ENCODE measurements at regions of chr13 and their contacts with region 1.

Region 1: DNA sequence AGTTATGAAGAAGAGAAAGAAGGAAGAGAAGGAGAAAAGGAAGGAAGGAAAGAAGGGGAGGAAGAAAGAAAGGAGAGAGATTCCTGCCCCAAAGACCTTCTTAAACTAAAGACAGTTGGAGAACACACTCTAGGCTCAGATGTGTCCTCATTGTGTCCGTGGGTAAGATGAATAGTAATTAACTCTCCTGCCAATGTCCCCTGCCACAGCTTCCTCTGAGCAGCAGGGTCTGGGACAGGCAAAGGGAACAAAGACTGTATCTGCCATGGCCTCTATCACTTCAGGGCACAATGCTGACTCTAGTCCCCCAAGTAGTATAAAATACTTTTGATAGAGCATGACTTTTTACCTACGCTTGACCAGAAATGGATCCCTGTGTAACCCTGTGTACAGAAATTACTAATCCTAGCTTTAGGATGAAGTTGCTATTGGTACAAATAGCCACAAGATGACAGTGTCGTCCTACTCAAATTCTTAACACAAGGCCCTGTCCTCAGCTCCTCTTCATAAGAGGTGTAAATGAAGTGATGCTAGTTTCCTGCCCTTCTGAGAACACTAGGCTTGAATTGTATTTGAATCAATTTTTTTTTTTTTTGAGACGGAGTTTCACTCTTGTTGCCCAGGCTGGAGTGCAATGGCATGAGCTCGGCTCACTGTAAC is 186.2 kb upstream of the GPR12 start:
- DNase-seq: peak; percentile 73
- ATAC-seq: peak; percentile 97
- H3K4me3 ChIP-seq: no peak overlapping the region
- H3K27ac ChIP-seq: no peak overlapping the region
- H3K4me1 ChIP-seq: peaks cover 3% of the 10 kb centered on the region; the same call in 1 of the 2 replicates
- H3K27me3 ChIP-seq: peaks cover 13% of the 10 kb centered on the region
- CTCF ChIP-seq: peak; percentile 93
- POLR2A ChIP-seq: 0 out of 2 replicates have a peak, but pooled peaks have one; percentile 31
- RAD21 ChIP-seq: peak; percentile 95

Region 2: DNA sequence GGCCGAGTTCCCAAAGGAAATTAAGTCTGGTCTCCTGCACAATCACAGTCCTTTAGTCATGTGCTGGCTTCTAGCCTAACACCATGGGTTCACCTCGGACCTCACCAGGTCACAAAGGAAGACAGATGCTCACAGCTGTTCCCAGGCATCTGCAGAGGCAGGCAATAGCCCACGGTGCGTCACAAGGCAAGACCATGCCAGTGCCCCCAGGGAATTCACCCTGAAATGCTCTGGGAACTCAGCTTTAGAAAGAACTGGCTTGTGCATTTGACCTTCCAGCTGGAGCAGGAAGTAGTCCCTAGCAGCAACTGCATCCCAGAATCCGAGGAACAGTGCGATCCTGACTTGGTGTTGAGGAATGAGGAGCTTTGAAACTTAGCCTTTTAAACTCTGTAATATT is 486.2 kb before region 1 on chr13:
- CTCF ChIA-PET with region 1: no interaction called
- POLR2A ChIA-PET with region 1: no interaction called
- dilution Hi-C with region 1: no loop called
- in situ Hi-C with region 1: no loop called
- intact Hi-C with region 1: no loop called
- DNase-seq: peak; percentile 84
- ATAC-seq: peak; percentile 48
- H3K4me3 ChIP-seq: no peak overlapping the region
- H3K27ac ChIP-seq: no peak overlapping the region
- H3K4me1 ChIP-seq: peaks cover 5% of the 10 kb centered on the region; the same call in 1 of the 2 replicates
- H3K27me3 ChIP-seq: peaks cover 5% of the 10 kb centered on the region; the same call in 1 of the 2 replicates
- CTCF ChIP-seq: no peak
- POLR2A ChIP-seq: no peak
- RAD21 ChIP-seq: no peak

Region 3: DNA sequence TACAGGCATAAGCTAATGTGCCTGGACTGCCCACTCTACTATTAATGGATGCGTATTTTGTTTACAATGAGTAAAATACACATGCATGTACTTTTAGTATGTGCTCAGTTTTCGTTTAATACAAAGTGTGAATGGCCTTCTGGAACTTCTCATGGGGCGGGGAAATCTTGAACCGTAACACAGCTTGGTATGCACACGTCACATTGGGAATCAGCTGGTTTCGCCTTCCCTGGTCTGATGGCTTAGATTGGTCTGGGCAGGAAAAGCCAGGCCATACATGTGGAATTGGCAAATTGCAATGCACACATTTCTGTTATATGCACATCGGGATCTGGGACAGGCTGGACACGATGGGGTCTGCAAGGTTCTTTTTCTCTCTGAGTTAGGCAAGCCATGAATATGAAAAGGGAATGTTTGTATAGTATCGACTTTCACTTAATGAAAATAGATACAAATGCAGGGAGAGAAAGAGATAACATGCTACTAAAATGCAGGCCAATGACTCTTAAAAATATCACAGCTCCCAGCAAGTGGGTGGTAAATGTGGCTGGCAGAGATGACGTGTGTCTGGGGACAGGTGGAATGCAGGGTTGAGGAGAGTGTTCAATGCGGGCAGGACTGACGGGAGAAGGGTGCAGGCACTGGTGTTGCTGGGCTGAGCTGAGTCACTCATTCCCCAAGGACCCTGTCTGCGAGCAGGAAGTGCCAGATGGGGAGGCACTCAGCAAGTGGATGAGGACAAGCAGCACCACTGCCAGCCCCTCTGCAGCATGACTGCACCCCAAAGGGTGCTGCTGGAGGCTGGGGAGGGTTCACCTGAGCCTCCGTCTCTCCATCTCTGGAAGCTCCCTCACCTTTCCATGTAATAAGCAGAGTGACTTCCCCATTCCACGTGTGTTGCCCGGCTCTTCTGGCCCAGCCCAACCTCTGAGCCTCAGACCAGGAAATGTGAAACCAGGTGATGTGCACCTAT is 17.8 kb after region 1 on chr13:
- CTCF ChIA-PET with region 1: interaction called, 10 read pairs
- POLR2A ChIA-PET with region 1: no interaction called
- dilution Hi-C with region 1: no loop called
- in situ Hi-C with region 1: no loop called
- intact Hi-C with region 1: no loop called
- DNase-seq: peak; percentile 67
- ATAC-seq: no peak; the same call in 1 of the 2 replicates
- H3K4me3 ChIP-seq: no peak overlapping the region
- H3K27ac ChIP-seq: no peak overlapping the region
- H3K4me1 ChIP-seq: peaks cover 18% of the 10 kb centered on the region; the same call in 1 of the 2 replicates
- H3K27me3 ChIP-seq: peaks cover 24% of the 10 kb centered on the region
- CTCF ChIP-seq: no peak
- POLR2A ChIP-seq: no peak
- RAD21 ChIP-seq: no peak

Region 4: DNA sequence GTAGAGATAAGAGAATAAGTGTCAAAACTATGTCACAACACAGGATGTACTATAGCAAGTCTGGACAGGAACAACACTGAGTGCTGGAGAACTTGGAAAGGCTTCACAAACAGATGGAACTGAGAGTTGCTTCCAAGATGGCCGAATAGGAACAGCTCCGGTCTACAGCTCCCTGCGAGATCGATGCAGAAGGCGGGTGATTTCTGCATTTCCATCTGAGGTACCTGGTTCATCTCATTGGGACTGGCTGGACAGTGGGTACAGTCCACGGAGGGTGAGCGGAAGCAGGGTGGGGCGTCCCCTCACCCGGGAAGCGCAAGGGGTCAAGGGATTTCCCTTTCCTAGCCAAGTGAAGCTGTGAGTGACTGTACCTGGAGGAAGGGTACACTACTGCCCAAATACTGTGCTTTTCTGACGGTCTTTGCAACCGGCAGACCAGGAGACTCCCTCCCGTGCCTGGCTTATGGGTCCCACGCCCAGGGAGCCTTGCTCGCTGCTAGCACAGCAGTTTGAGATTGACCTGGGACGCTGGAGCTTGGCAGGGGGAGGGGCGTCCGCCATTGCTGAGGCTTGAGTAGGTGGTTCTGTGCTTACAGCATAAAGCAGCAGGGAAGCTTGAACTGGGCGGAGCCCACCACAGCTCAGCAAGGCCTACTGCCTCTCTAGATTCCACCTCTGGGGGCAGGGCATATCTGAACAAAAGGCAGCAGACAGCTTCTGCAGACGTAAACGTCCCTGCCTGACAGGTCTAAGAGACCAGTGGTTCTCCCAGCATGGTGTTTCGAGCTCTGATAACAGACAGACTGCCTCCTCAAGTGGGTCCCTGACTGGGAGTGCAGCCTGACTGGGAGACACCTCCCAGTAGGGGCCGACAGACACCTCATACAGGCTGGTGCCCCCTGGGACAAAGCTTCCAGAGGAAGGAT is 178.8 kb after region 1 on chr13:
- CTCF ChIA-PET with region 1: interaction called, 10 read pairs
- POLR2A ChIA-PET with region 1: no interaction called
- dilution Hi-C with region 1: no loop called
- in situ Hi-C with region 1: no loop called
- intact Hi-C with region 1: no loop called
- DNase-seq: no peak
- ATAC-seq: no peak
- H3K4me3 ChIP-seq: no peak overlapping the region
- H3K27ac ChIP-seq: no peak overlapping the region
- H3K4me1 ChIP-seq: peaks cover 14% of the 10 kb centered on the region
- H3K27me3 ChIP-seq: no peaks in the 10 kb centered on the region
- CTCF ChIP-seq: no peak
- POLR2A ChIP-seq: no peak
- RAD21 ChIP-seq: no peak

Region 5: GRCh38 chr13:27339299-27339698 is 392.5 kb after region 1 on chr13:
- CTCF ChIA-PET with region 1: interaction called, 11 read pairs
- POLR2A ChIA-PET with region 1: no interaction called
- dilution Hi-C with region 1: no loop called
- in situ Hi-C with region 1: no loop called
- intact Hi-C with region 1: no loop called
- DNase-seq: peak; percentile 42
- ATAC-seq: peak; percentile 28; the same call in 1 of the 2 replicates
- H3K4me3 ChIP-seq: no peak overlapping the region
- H3K27ac ChIP-seq: no peak overlapping the region
- H3K4me1 ChIP-seq: peaks cover 12% of the 10 kb centered on the region
- H3K27me3 ChIP-seq: no peaks in the 10 kb centered on the region; the same call in 1 of the 2 replicates
- CTCF ChIP-seq: peak; percentile 44
- POLR2A ChIP-seq: no peak
- RAD21 ChIP-seq: peak; percentile 42

Measured in IMR-90 (cell line).